GM18951 (cell line): ENCODE measurements at regions of chr1 and their contacts with region 1.

Region 1: DNA sequence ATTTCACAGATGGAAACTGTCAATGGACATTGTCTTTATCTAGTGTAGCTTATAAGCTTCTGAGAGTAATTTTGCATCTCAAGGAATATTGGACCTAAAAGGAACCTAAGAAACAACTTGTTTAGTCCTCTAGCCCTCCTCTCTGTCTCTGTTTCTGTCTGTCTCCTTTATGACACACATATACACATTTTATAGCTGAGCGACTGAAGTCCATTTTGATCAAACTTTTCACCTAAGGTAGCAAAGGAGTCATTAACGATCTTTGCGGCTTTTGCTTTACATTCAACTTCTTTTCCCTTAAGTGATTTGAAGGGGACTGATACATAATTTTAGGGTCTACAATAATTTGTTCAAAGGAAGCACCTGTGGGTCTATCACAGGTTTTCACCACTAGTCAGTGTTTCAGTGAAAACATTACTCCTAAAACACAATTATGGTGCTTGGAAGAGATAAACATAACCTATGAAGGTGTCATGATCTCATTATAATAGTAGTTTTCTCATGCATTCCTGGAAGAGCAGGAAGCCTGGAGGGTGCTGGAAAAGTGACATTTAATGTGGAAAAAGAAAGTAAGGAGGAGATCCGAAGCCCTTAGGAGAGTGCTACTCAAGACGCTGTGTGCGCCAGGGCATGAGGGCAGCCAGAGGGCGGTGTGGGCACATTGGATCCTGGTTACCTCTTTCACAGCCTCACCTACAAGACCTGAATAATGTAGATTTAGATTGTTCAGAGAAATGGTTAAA is 248.6 kb downstream of the DNM3 start:
- POLR2A ChIP-seq: no peak

Region 2: GRCh38 chr1:172401892-172402291 is 312.0 kb after region 1 on chr1:
- in situ Hi-C with region 1: loop called (anchors 25 kb)
- POLR2A ChIP-seq: no peak